ENCODE measurements at regions of chr18 and their contacts with region 1.

Region 1: DNA sequence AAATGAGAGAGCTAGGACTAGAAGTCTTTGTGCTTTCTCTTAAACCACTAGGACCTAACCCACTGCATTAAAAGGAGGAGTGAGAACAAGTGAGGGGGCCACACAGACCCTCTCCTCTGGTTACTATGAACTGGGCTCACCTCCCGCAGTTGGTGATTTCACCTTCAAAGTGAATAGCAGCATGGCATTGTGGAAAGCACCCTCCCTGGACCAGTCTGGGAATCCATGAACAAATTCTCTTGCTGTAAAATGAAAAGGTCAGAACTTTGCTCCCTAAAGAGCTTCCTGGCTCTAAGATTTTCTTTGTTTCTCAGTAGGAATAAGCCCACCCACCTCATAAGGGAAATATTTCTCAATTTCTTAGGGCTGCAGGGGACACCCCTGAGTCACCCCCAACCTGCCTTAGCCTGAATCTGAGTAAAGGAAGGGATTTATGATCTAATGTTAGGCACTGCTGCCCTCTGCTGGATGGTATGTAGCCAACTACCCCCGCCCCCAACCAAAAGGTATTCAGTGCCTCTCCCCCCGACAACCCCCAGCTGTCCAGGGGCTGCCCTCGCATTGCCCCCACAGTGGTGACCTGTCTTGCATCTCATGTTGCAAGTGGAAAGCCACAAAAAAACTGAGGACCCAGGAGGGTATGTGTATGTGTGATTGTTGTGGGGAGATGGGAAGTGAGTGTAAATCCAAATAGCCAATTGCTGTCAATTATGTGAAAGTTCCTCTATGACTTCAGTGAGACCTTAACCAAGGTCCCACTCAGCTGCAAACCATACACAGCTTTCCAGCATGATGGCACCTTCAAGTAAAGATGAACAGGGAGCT is 230.9 kb upstream of the SLC14A2 start:
- DNase-seq: peak; percentile 5
- H3K4me3 Mint-ChIP-seq: no peak overlapping the region
- H3K27ac Mint-ChIP-seq: no peak overlapping the region
- H3K4me1 Mint-ChIP-seq: no peaks in the 10 kb centered on the region
- H3K27me3 Mint-ChIP-seq: peaks cover 3% of the 10 kb centered on the region

Region 2: GRCh38 chr18:44130376-44130942 is 1253.9 kb before region 1 on chr18:
- intact Hi-C with region 1: loop called (anchors 5 kb)
- DNase-seq: no peak
- H3K4me3 Mint-ChIP-seq: no peak overlapping the region
- H3K27ac Mint-ChIP-seq: no peak overlapping the region
- H3K4me1 Mint-ChIP-seq: no peaks in the 10 kb centered on the region
- H3K27me3 Mint-ChIP-seq: no peaks in the 10 kb centered on the region

Region 3: GRCh38 chr18:44786688-44787087 is 597.7 kb before region 1 on chr18:
- intact Hi-C with region 1: no loop called
- DNase-seq: no peak
- H3K4me3 Mint-ChIP-seq: no peak overlapping the region
- H3K27ac Mint-ChIP-seq: no peak overlapping the region
- H3K4me1 Mint-ChIP-seq: peaks cover 23% of the 10 kb centered on the region
- H3K27me3 Mint-ChIP-seq: peaks cover 6% of the 10 kb centered on the region

Region 4: GRCh38 chr18:45275367-45276113 is 108.8 kb before region 1 on chr18:
- intact Hi-C with region 1: loop called (anchors 1 kb)
- DNase-seq: no peak
- H3K4me3 Mint-ChIP-seq: no peak overlapping the region
- H3K27ac Mint-ChIP-seq: no peak overlapping the region
- H3K4me1 Mint-ChIP-seq: no peaks in the 10 kb centered on the region
- H3K27me3 Mint-ChIP-seq: no peaks in the 10 kb centered on the region